HAP-1 (cell line): ENCODE measurements at regions of chr6 and their contacts with region 1.

Region 1: DNA sequence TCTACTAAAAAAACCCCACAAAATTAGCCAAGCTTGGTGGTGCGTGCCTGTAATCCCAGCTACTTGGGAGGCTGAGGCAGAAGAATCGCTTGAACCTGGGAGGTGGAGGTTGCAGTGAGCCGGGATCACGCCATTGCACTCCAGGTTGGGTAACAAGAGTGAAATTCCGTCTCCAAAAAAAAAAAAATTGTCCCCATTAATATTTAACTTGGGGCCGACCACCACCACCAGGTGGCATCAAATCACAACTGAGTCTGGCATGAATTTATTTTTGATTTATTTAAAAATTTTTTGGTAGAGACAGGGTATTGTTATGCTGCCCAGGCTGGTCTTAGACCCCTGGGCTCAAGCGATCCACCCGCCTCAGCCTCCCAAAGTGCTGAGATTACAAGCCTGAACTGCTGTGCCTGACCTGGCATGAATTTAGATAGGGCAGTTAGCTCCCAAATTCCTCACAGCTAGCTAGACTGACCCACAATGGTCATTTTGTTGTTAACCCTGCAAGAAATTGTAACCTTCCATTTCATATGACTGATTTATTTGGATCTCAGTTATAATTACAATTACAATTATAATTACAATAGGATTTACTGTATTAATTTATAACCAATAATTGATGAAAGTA is 17.1 kb upstream of the BEND3 start:
- DNase-seq: peak; percentile 36 to 73
- H3K4me3 ChIP-seq: no peak overlapping the region
- H3K4me1 ChIP-seq: peaks cover 10% of the 10 kb centered on the region
- H3K27me3 ChIP-seq: no peaks in the 10 kb centered on the region

Region 2: DNA sequence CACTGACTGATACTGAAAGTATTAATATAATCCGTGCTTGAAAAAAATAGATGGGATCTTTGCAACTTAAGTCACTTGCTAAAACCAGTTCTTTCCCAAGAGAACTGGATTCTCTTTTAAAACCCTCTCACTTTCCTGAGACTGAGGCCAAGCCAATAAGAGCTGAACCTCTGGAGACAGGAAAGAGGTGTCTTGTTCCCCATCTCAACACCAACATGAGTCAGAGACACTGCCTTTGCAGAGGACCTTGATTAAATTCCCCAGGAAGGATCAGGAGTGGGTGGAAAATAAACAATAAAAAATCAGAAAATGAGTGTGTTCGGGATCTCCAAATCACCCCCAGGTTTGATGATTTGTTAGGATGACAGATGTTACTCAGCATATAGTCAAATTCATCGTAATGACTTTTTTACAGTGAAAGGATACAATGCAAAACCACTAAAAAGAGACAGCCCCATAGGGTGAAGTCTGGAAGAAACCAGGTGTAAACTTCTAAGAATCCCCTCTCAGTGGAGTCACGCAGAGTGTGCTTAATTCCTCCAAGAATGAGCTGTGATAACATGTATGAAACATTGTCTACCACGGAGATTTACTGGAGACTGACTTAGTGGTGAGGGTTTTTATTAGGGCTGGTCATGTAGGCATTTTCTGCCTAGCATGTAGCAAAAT is 105.7 kb after region 1 on chr6:
- in situ Hi-C with region 1: no loop called
- DNase-seq: no peak
- H3K4me3 ChIP-seq: no peak overlapping the region
- H3K4me1 ChIP-seq: peaks cover 8% of the 10 kb centered on the region
- H3K27me3 ChIP-seq: no peaks in the 10 kb centered on the region

Region 3: GRCh38 chr6:107489636-107490565 is 357.5 kb after region 1 on chr6 and contains the start of gene SOBP:
- in situ Hi-C with region 1: loop called (anchors 10 kb)
- DNase-seq: peak; percentile 85 to 91
- H3K4me3 ChIP-seq: peak within 1 kb of the TSS; percentile 72
- H3K4me1 ChIP-seq: peaks cover 37% of the 10 kb centered on the region
- H3K27me3 ChIP-seq: no peaks in the 10 kb centered on the region